ENCODE measurements at regions of chr3 and their contacts with region 1.

Region 1: DNA sequence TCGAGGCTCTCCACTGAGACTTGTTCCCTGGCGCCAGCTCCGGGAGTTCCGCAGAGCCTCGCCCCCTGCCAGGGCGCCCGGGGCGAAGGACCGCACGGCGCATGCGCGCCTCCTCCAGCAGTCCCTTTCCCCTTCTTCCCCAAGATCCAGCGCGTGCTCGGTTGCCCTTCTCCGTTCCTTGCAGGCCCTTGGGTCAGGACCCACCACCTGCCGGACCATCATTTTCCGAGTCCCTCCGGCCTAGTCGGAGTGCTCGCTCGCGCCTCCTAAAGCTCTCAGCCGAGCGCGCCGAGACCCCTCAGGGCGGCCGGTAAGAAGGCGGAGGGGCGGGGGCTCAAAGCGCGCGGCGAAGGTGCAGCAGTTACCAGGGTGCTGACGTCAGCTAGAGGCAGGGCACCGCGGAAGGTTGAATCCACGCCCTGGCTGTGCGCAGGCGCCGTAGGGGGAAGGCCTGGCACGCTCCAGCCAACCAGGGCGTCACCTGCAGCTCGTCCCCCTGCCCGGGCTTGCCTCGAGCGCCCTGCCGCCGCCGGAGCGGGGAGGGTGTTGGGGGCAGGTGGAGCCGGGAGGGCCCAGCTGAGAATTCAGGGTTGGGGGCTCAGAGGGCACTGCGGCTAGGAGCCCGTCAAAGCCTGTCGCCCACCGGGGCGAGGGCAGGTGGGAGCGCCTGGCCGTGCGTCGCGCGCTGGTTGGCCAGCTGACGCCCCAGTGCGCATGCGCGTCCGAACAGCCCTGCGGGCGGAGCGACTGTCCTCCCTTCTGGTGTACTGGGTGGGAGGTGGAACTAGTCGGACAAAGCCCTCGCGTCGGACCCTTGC is at the start of gene TCAIM:
- DNase-seq: peak; percentile 88 to 98
- H3K4me3 ChIP-seq: peak within 1 kb of the TSS; percentile 69
- H3K27ac ChIP-seq: peak within 1 kb of the TSS; percentile 63
- H3K4me1 ChIP-seq: peaks cover 19% of the 10 kb centered on the region
- H3K27me3 ChIP-seq: no peaks in the 10 kb centered on the region
- CTCF ChIP-seq: no peak
- total RNA-seq, gene TCAIM: 22.8 and 28.3 TPM in 2 replicates

Region 2: DNA sequence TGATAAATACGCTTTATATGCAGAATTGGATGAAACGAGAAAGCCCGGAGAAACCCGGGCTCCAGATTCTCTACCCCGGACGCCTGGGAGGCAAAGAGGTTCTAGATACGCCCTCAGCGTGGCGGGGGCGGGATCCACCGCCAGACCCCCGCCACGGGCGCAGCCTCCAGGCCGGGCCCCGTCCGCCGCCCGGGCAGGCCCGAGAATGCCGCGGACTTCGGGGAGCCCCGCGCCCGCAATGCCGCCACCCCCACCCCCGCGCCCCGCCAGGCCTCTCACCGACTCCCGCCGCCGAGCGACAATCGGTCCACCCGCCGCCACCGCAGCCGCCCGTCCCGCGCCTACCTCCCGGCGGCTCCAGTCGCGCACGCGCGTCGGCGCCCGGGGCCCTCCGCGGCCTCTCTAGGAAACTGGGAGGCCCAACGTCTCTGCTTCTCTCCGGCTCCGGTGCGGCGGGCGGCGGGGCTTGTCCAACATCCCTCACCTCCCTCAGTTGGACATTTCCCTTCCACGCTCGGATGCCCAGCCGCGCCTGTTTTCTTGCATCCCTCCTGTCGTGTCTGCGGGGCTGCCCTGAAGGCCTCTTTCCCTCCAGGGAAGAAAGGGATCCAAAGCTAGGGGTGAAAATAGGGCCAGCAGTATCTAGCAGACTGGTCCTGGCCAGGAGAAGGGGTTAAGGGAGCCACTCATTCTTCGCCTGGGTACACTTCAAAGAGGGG is 139.3 kb after region 1 on chr3 and contains the start of gene ZNF445:
- CTCF ChIA-PET with region 1: no interaction called
- POLR2A ChIA-PET with region 1: no interaction called
- intact Hi-C with region 1: loop called (anchors 5 kb)
- DNase-seq: peak; percentile 53 to 81
- H3K4me3 ChIP-seq: peak within 1 kb of the TSS; percentile 64
- H3K27ac ChIP-seq: no peak within 1 kb of the TSS
- H3K4me1 ChIP-seq: peaks cover 9% of the 10 kb centered on the region; the same call in 1 of the 2 replicates
- H3K27me3 ChIP-seq: no peaks in the 10 kb centered on the region
- CTCF ChIP-seq: no peak
- total RNA-seq, gene ZNF445: 15.9 and 20.3 TPM in 2 replicates